Dendritic cell treated with granulocyte-macrophage colony-stimulating factor and Interleukin-4, amounts not matched to agents 40 ng/mL and 50 ng/mL, for 4 days (primary cell): ENCODE measurements at regions of chr14 and their contacts with region 1.

Region 1: DNA sequence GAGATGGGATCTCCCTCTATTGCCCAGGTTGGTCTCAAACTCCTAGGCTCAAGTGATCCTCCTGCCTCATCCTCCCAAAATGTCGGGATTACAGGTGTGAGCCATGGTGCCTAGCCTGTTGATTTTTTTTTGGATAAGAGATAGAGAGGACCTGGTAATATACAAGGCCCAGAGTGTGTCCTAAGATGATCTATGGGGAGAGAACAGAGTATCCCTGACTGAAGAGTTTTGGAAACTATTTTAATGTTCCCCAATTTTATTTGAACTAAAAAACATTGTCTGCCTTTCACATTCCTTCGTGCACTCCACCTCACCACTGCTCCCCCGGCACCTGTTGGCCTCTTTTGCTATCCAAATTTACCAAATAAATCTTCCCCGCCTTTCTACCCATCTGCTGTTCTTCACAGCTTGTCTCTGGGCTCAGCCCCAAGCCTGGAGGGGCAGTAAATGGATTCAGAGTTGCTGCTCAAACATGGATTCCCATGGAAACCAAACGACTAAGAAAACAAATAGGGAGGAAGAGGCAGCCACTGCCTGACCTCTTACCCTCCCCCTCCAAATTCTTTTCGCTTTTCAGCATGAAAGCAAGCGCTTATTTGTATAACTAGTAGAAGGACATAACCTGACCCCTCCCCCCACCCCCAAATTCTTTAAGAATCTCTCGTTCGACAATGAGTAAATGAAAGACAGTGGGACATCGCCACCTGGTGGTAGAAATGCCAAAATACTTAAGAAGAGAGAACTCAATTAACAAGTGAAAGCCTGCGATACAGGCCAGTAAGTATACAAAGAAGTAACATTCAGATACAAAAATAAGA is 22.6 kb downstream of the OR10G3 start:
- H3K4me3 Mint-ChIP-seq: peak overlapping the region; percentile 30
- H3K27ac Mint-ChIP-seq: no peak overlapping the region
- H3K4me1 Mint-ChIP-seq: peaks cover 5% of the 10 kb centered on the region
- H3K27me3 Mint-ChIP-seq: no peaks in the 10 kb centered on the region

Region 2: DNA sequence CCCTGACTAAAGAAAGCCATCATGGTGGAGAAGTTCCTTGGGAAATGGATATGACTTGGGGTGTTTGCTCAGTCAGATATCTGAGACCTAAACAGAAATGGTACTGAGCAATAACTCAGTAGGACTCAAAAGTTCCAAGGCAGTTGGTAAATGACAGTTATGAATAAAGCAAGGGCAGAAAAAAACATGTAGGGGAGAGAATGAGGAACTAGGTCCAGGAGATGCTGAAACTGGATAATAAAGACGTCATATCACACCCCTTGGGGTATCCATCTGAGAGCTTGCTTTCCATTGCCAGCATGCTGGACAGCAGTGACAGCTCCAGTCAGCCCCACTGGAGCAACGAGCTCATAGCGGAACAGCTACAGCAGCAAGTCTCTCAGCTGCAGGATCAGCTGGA is 239.9 kb before region 1 on chr14:
- intact Hi-C with region 1: no loop called
- H3K4me3 Mint-ChIP-seq: no peak overlapping the region
- H3K27ac Mint-ChIP-seq: peak overlapping the region; percentile 65
- H3K4me1 Mint-ChIP-seq: peaks cover 60% of the 10 kb centered on the region
- H3K27me3 Mint-ChIP-seq: peaks cover under 1% of the 10 kb centered on the region

Region 3: GRCh38 chr14:21498553-21499526 is 58.5 kb before region 1 on chr14:
- intact Hi-C with region 1: loop called (anchors 1 kb)
- H3K4me3 Mint-ChIP-seq: no peak overlapping the region
- H3K27ac Mint-ChIP-seq: no peak overlapping the region
- H3K4me1 Mint-ChIP-seq: no peaks in the 10 kb centered on the region
- H3K27me3 Mint-ChIP-seq: no peaks in the 10 kb centered on the region